ENCODE measurements at regions of chr17 and their contacts with region 1.

Region 1: GRCh38 chr17:4407851-4408250 is 25.9 kb upstream of the SPNS3 start:
- DNase-seq: peak; percentile 42 to 74 (median 64)
- ATAC-seq: peak; percentile 91 to 93 (median 92)
- H3K4me3 ChIP-seq: no peak overlapping the region
- H3K27ac ChIP-seq: peak overlapping the region in 1 of 4 donors; percentile 17
- H3K4me1 ChIP-seq: peaks cover 0 to 7% (median 0%) of the 10 kb centered on the region in 3 donors
- H3K27me3 ChIP-seq: no peaks in the 10 kb centered on the region
- CTCF ChIP-seq: no peak

Region 2: GRCh38 chr17:4215882-4216570 is 191.8 kb before region 1 on chr17:
- intact Hi-C with region 1: loop called in 1 of 3 experiments (anchors 10 kb)
- DNase-seq: no peak
- ATAC-seq: peak in 2 of 4 donors; percentile 22 to 49
- H3K4me3 ChIP-seq: no peak overlapping the region
- H3K27ac ChIP-seq: no peak overlapping the region
- H3K4me1 ChIP-seq: no peaks in the 10 kb centered on the region
- H3K27me3 ChIP-seq: no peaks in the 10 kb centered on the region
- CTCF ChIP-seq: no peak

Region 3: DNA sequence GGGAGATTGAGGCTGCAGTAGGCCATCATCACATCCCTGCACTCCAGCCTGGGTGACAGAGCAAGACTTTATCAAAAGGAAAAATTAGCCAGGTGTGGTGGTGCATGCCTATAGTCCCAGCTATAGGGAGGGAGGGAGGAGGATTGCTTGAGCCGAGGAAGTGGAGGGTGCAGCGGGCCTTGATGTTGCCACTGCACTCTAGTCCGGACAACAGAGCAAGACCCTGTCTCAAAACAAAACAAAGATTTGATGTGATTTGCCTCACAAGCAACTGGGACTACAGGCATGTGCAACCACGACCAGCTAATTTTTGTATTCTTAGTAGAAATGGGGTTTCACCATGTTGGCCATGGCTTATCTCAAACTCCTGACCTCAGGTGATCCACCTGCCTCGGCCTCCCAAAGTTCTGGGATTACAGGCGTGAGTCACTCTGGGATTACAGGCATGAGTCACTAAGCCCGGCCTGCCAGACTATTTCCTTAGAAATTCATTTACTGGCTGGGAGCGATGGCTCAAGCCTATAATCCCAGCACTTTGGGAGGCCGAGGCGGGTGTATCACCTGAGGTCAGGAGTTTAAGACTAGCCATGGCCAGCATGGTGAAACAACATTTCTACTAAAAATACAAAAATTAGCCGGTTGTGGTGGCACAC is 52.9 kb before region 1 on chr17:
- intact Hi-C with region 1: no loop called
- DNase-seq: peak in 1 of 6 donors; percentile 42
- ATAC-seq: no peak
- H3K4me3 ChIP-seq: no peak overlapping the region
- H3K27ac ChIP-seq: no peak overlapping the region
- H3K4me1 ChIP-seq: peaks cover 6 to 10% (median 9%) of the 10 kb centered on the region in 3 donors
- H3K27me3 ChIP-seq: no peaks in the 10 kb centered on the region
- CTCF ChIP-seq: no peak

Measured in pancreas (tissue), 10 donors.